ENCODE measurements at regions of chr12 and their contacts with region 1.

Region 1: DNA sequence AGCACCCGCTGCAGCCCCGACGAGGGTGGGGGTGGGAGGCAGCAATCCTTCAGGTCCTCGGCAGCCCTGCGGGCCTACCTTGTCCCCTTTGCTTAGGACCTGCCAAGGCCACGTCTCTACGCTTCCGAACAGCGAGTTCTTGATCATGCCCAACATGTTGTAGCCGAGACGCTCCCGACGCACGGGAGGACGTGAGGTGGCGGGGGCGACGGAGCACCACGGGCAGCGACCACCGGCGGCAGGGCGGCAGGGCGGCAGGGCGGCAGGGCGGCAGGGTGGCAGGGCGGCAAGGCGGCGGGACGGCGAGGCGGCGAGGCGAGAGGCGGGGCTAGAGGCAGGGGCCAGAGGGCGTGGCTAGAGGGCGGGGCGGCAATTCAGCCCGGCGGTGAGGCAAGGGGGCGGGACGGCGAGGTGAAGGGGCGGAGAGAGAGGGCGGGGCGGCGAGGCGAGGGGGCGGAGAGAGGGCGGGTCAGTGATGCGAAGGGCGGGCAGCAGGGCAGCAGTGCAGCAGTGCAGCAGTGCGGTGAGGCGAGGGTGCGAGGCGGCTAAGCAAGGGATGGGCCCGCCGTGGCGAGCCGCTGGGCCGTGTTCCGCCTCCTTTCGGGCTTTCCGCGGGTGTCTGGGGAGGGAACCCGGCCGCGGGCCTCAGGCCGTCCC is at the start of gene HEBP1:
- DNase-seq: peak; percentile 92
- H3K4me3 Mint-ChIP-seq: peak within 1 kb of the TSS; percentile 82
- H3K27ac Mint-ChIP-seq: peak within 1 kb of the TSS; percentile 26
- H3K4me1 Mint-ChIP-seq: peaks cover 23% of the 10 kb centered on the region
- H3K27me3 Mint-ChIP-seq: peaks cover 30% of the 10 kb centered on the region
- total RNA-seq, gene HEBP1: 11.9 and 13.3 TPM in 2 replicates

Region 2: DNA sequence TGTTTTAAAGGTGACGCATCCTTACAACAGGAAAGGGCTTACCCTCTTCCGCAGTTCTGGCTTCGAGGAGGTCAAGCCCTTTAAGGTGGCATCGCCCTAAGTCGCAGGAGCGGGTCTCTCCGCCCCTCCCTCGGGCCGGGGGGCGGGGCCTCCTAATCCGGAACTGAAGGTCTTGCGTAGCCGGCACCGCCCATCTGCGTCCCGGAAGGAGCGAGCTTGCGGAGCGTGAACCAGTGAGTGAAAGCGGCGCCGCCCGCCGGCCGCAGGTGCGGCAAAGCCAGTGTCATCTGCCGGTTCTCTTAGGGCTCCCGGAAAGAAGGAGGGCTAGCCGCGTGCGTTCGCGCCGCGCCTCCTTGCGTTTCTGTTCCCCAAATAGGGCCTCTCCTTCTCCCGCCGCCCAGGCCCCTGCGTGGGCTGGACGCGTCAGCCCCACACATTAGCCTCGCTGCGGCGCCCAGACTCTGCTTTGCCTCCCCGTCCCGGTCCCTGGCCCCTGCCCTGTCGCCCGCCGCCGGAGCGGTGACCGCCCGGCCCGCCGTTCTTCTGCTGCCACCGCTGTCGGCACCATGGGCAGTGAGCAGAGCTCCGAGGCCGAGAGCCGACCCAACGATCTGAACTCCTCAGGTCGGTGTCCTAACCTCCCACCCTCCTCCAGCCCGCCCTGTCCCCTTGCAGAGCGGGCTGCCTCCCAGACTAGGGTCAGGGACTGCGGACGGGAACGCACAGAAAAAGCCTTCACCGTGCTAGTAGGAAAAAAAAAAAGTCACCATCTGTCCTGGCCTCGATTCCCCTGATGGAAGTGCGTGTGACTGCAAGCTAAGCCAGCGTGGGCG is 643.0 kb before region 1 on chr12 and contains the start of gene BORCS5:
- intact Hi-C with region 1: loop called (anchors 10 kb)
- DNase-seq: peak; percentile 98
- H3K4me3 Mint-ChIP-seq: peak within 1 kb of the TSS; percentile 96
- H3K27ac Mint-ChIP-seq: peak within 1 kb of the TSS; percentile 99
- H3K4me1 Mint-ChIP-seq: peaks cover 41% of the 10 kb centered on the region
- H3K27me3 Mint-ChIP-seq: no peaks in the 10 kb centered on the region
- total RNA-seq, gene BORCS5: 41.8 and 45.9 TPM in 2 replicates

Region 3: DNA sequence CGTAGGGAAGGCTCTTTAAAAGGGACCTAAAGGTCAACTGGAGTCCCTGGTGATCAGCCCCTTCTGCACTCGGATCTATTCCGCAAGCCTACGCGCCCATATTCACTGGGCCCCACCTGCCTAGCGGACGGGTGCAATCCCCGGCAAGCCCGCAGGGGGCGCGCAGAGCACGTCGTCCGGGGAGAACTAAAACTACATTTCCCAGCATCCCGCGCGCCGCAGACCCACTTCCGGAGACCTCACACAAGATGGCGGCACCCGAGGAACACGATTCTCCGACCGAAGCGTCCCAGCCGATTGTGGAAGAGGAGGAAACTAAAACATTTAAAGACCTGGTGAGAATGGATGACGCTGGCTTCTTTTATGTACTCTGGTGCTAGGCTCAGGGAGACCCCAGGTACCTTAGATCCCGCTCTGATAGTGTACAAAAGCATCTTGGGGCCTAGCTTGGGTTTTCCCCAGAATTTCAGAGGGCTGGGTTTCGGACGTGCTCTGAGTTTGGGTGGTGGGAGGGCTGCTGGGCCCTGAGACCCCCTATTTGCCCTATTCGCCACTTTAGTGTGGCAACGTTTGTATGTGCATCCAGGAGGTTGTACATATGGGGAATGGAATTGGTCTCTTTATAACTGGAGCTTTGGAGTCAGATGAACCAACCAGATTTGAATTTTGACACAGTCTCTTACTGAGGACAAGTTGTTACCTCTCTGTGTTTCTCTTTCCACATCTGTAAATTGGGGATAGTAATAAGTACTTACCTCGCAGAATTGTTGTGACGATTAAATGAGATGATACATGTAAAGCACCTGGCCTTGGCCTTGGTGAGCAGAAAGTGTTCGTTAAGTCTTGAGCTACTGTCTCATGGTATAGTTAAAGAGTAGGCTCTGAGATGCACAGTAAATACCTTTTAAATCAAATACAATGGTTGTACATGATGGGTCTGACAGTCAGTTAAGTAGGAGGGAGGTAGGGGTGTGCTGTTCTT is 186.7 kb before region 1 on chr12 and contains the start of gene DDX47:
- intact Hi-C with region 1: loop called (anchors 1 kb)
- DNase-seq: peak; percentile 93
- H3K4me3 Mint-ChIP-seq: peak within 1 kb of the TSS; percentile 90
- H3K27ac Mint-ChIP-seq: peak within 1 kb of the TSS; percentile 92
- H3K4me1 Mint-ChIP-seq: peaks cover 43% of the 10 kb centered on the region
- H3K27me3 Mint-ChIP-seq: no peaks in the 10 kb centered on the region
- total RNA-seq, gene DDX47: 114 and 120 TPM in 2 replicates

Region 4: GRCh38 chr12:12899530-12900380 is 100.3 kb before region 1 on chr12:
- intact Hi-C with region 1: loop called (anchors 5 kb)
- DNase-seq: no peak
- H3K4me3 Mint-ChIP-seq: no peak overlapping the region
- H3K27ac Mint-ChIP-seq: peak overlapping the region; percentile 40
- H3K4me1 Mint-ChIP-seq: peaks cover 11% of the 10 kb centered on the region
- H3K27me3 Mint-ChIP-seq: peaks cover 23% of the 10 kb centered on the region

Region 5: DNA sequence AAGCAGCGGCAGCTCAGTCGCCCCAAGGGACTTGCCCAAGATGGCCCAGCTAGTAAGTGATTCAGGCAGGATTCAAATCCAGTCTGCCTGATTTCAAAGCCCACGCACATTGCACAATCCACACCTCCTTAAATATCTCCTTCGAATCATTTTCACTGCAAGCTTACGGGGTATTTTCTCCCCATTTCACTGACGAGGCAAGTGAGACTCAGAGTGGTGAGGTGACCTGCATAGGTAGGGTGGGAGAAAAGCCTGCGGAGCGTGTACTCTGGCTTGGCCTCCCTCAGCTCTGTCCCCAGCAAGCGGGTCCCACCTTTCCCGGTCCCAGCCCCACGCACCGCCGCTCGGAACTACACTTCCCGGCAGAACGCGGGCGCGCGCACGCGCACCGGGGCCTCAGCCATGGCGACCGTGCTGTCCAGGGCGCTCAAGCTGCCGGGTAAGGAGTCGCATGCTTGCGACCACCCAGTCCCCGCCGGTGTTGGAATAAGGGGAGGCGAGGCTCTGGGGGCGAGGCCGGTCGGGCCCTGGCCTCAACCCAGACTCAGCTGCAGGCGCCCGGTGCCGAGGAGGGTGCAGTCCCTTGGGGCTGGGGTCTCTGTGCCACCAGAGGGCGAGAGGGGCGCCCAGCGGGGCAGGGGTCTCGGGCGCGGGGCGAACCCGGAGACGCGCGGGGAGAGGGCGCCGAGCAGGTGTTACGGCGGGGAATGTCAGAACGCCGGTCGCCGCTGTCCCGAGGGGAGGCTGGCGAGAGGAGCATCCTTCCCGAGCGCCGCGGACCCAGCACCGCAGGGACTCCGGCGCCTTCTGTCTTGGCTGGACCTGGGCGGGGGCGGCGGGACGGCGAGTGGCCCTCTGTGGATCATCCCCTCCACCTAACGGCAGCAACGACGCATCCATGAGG is 44.2 kb after region 1 on chr12 and contains the start of gene FAM234B:
- intact Hi-C with region 1: loop called (anchors 5 kb)
- DNase-seq: peak; percentile 56
- H3K4me3 Mint-ChIP-seq: peak within 1 kb of the TSS; percentile 82
- H3K27ac Mint-ChIP-seq: no peak within 1 kb of the TSS
- H3K4me1 Mint-ChIP-seq: peaks cover 2% of the 10 kb centered on the region
- H3K27me3 Mint-ChIP-seq: peaks cover 26% of the 10 kb centered on the region
- total RNA-seq, gene FAM234B: 5.7 and 6.8 TPM in 2 replicates

Region 6: DNA sequence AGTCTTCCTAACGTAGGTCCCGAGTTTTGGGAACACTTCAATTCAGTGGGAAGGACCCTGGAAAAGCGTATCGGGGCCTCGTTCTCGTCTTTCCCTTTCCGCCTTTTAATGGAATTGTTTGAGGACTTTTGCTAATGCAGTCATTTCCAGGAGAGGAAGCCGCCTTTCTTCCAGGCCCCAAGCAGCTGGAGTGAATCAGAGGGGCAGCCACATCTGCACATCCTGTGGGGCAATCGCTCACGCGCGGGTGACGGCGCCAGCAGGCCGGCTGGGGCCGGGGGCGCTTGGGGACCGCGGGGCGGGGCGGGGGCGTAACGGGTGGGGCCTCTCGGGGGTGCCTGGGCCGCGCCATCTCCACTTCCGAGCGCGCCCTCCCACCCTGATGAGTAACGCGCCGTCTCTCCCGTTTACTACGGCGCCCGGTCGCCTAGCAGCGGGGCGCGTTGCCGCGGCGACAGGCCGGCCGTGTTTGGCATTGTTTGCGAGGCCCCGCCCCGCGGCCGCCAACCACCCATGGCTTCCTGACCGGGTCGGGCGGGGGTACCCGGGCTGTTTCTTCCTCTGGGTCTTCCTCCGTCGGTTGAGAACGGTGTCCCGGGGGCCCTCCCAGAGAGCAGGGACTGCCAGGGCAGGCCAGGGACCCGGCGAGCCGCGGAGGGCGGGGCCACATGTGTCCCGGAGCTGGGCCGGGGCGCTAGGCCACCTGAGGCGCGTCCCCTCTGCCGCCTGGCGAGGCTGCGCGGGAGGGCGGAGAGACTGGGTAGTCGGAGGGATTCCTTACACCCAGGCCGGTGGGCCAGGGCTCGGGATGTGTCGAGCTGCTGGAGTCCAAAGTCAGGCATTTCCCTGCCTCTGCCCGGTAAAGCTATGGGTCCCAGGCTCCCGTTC is 101.0 kb after region 1 on chr12:
- intact Hi-C with region 1: loop called (anchors 2 kb)
- DNase-seq: peak; percentile 89
- H3K4me3 Mint-ChIP-seq: peak overlapping the region; percentile 71
- H3K27ac Mint-ChIP-seq: peak overlapping the region; percentile 75
- H3K4me1 Mint-ChIP-seq: peaks cover 47% of the 10 kb centered on the region
- H3K27me3 Mint-ChIP-seq: peaks cover 5% of the 10 kb centered on the region

Region 7: GRCh38 chr12:13211859-13212664 is 212.0 kb after region 1 on chr12:
- intact Hi-C with region 1: loop called (anchors 2 kb)
- DNase-seq: peak; percentile 58
- H3K4me3 Mint-ChIP-seq: no peak overlapping the region
- H3K27ac Mint-ChIP-seq: no peak overlapping the region
- H3K4me1 Mint-ChIP-seq: peaks cover 26% of the 10 kb centered on the region
- H3K27me3 Mint-ChIP-seq: peaks cover 1% of the 10 kb centered on the region

Measured in activated T-helper 2 cell treated with anti-CD3 and anti-CD28 coated beads, Interferon-gamma antibody, Interleukin-2, Interleukin-4, amounts not matched to agents 10 μg/mL and 5 μg/mL and 100 μg/mL, durations not matched to agents 14 hours and 24 hours and 36 hours (primary cell).